MCF 10A (cell line): ENCODE measurements at regions of chr10 and their contacts with region 1.

Region 1: GRCh38 chr10:28302638-28303488 is at the start of gene MPP7:
- DNase-seq: peak; percentile 98
- H3K4me3 Mint-ChIP-seq: peak within 1 kb of the TSS; percentile 88
- H3K27ac Mint-ChIP-seq: no peak within 1 kb of the TSS
- H3K4me1 Mint-ChIP-seq: peaks cover 13% of the 10 kb centered on the region
- H3K27me3 Mint-ChIP-seq: peaks cover 25% of the 10 kb centered on the region
- CTCF ChIP-seq: peak; percentile 28
- total RNA-seq, gene MPP7: 4.1 and 5.4 TPM in 2 replicates

Region 2: DNA sequence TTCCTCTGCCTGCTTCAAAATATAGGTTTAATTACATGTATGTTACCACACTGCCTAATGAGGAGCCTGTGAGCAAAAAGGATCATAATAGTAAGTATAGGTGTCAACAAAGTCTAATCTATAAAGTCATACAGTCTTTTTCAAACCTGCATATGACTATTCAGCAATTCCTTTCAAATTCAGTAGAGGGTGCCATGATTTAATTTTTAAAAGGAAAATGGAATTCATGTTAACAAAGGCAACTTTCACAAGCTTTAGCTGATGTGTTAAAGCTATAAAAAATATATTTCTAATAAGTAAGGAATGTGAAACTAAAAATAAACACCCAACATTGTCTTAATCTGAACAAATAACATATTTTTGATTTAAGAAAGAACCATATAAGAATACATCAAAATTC is 52.1 kb before region 1 on chr10:
- CTCF ChIA-PET with region 1: interaction called, 7 read pairs
- POLR2A ChIA-PET with region 1: interaction called, 18 read pairs
- intact Hi-C with region 1: loop called (anchors 1 kb)
- DNase-seq: peak; percentile 28
- H3K4me3 Mint-ChIP-seq: no peak overlapping the region
- H3K27ac Mint-ChIP-seq: no peak overlapping the region
- H3K4me1 Mint-ChIP-seq: peaks cover 17% of the 10 kb centered on the region
- H3K27me3 Mint-ChIP-seq: no peaks in the 10 kb centered on the region
- CTCF ChIP-seq: peak; percentile 60

Region 3: GRCh38 chr10:28291881-28292297 is 11.0 kb before region 1 on chr10:
- CTCF ChIA-PET with region 1: interaction called, 4 read pairs
- POLR2A ChIA-PET with region 1: interaction called, 18 read pairs
- intact Hi-C with region 1: no loop called
- DNase-seq: peak; percentile 82
- H3K4me3 Mint-ChIP-seq: no peak overlapping the region
- H3K27ac Mint-ChIP-seq: peak overlapping the region; percentile 79
- H3K4me1 Mint-ChIP-seq: peaks cover 18% of the 10 kb centered on the region
- H3K27me3 Mint-ChIP-seq: no peaks in the 10 kb centered on the region
- CTCF ChIP-seq: no peak

Region 4: DNA sequence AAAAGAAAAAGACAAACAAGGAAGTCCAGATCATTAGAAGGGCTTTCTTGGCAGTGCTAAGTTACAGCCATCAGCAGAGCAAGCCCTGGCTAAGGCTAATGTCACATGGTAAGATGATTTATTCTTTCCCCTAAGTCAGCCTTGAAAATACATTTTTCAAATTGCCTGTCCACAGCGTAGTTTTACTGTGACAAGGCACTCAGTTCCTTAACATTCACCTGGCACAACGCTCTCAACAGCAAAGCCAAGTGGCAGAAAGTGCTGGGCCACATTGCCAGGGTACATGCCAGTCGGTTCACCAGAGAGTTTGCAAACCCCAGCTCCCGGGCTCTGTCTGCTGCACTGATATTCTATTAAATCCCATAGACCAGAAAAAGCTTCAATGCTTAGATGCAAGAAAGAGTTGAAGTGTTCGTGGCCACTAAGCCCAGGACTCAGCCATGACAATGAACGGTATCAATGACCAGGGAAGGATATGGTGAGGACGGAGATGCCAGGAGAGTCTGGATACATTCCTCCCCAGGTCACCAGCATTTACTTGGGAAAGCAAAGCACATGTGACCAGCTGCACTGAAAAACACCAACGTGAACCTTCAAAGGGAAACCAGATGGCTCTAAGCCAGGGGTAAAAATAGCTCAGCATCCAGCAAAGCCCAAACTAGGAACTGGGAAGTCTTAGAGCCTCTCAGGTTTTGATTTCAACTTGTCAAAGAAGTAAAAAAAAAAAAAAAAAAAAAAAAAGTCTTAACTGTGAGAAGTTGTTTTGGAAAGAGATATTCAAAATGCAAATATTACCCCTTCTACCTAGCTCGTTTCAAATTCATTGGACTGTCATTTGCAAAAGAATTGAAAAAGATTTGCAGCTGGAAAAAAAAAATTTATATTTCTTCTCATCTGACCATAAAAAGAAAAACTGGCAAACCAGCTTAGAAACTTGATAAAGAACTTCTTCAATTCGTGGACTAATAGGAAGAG is 23.9 kb after region 1 on chr10:
- CTCF ChIA-PET with region 1: interaction called, 5 read pairs
- POLR2A ChIA-PET with region 1: interaction called, 16 read pairs
- intact Hi-C with region 1: no loop called
- DNase-seq: peak; percentile 31
- H3K4me3 Mint-ChIP-seq: no peak overlapping the region
- H3K27ac Mint-ChIP-seq: peak overlapping the region; percentile 47
- H3K4me1 Mint-ChIP-seq: peaks cover 10% of the 10 kb centered on the region
- H3K27me3 Mint-ChIP-seq: no peaks in the 10 kb centered on the region
- CTCF ChIP-seq: no peak

Region 5: DNA sequence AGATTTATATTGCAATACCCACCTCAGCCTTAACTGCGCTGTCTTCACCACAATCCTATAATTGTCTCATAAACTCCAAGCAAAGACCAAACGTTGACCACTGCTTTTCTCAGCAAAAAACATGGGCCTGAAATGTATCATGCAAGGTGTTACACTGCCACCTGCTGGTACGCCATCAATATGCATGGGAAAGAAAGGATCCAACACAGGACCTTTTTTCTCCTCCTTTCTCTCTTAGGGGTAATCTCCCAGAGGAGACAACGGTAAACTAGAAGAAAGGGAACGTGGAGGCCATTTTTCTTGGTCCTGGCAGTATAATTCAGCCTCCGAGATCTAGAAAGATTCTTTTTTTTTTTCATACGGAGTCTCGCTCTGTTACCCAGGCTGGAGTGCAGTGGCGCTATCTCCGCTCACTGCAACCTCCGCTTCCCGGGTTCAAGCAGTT is 79.1 kb after region 1 on chr10:
- CTCF ChIA-PET with region 1: interaction called, 19 read pairs
- POLR2A ChIA-PET with region 1: interaction called, 14 read pairs
- intact Hi-C with region 1: loop called (anchors 1 kb)
- DNase-seq: peak; percentile 84
- H3K4me3 Mint-ChIP-seq: no peak overlapping the region
- H3K27ac Mint-ChIP-seq: no peak overlapping the region
- H3K4me1 Mint-ChIP-seq: peaks cover 20% of the 10 kb centered on the region
- H3K27me3 Mint-ChIP-seq: no peaks in the 10 kb centered on the region
- CTCF ChIP-seq: peak; percentile 79

Region 6: DNA sequence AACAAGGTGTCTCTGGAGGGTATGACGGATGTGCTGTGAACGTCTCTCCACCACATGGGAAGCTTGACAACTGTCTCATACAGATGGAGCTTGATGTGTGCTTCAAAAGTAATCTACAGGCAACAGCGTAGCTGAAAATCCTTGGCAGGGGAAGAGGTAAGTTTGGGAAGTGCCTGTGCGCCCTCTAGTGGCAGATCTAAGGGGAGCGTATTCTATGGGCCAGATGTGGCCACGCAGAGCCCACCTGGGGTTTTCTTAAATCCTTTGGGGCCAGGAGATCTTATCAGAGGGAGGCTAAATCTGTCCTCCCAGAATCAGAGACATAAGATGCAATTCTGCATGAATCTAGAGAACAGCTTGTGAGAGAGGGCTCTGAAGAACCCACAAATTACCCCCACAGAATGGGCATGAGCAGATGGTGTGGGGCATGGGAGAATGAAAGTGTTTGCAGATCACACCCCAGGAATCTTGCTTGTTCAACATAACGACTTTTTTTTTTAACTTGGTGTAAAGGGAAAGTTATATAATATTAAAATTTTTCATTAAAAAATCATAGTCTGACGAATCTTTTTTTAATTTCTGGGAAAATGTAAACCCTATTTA is 91.2 kb after region 1 on chr10:
- CTCF ChIA-PET with region 1: interaction called, 10 read pairs
- POLR2A ChIA-PET with region 1: interaction called, 6 read pairs
- intact Hi-C with region 1: no loop called
- DNase-seq: peak; percentile 76
- H3K4me3 Mint-ChIP-seq: no peak overlapping the region
- H3K27ac Mint-ChIP-seq: no peak overlapping the region
- H3K4me1 Mint-ChIP-seq: peaks cover 5% of the 10 kb centered on the region
- H3K27me3 Mint-ChIP-seq: no peaks in the 10 kb centered on the region
- CTCF ChIP-seq: peak; percentile 86